Right lobe of liver (tissue), 6 donors: ENCODE measurements at regions of chr15 and their contacts with region 1.

Region 1: DNA sequence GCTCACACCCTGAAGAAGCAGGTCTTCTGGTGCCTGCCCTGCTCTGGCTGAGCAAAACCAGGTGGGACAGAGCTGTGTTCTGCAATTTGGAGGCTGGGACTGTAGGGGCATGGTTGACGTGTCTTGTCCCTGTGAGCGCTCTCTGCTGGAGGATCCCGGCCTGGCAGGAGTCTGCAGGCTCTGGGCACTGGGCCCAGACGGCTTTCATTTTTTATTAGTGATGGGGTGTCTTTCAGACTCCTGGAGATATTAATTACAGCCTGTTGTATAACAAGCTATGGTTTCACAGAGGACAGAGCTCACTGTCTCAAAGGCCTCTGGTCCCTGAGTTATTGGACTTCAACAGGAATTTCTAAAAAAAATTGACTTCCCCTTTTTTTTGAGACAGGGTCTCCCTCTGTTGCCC is 29.5 kb upstream of the ZNF710 start:
- DNase-seq: peak in 2 of 3 donors; percentile 61 to 65
- ATAC-seq: peak; percentile 78 to 90 (median 86)
- H3K4me3 ChIP-seq: no peak overlapping the region
- H3K27ac ChIP-seq: no peak overlapping the region
- H3K4me1 ChIP-seq: no peaks in the 10 kb centered on the region
- H3K27me3 ChIP-seq: no peaks in the 10 kb centered on the region
- CTCF ChIP-seq: peak; percentile 43 to 60 (median 52)
- POLR2A ChIP-seq: no peak

Region 2: DNA sequence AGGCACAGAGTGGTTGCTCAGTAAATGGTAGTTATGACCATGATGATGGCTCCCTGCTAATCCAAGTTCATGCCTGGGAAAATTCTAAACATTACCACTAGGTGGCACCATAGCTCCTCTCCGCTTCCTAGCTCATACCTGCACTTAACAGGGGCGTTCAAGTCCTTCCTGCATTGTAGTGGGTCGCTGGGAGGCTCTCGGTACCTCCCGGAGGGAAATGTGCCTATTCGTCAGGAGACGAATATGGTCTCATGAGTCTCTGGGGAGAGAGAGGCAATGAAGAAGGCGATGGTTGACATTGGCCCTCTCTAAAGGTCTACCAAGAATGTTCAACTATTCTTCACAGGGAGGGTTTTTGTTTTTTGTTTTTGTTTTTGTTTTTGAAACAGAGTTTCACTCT is 231.5 kb before region 1 on chr15:
- intact Hi-C with region 1: no loop called
- DNase-seq: peak in 1 of 3 donors; percentile 57
- ATAC-seq: peak; percentile 87 to 97 (median 94)
- H3K4me3 ChIP-seq: no peak overlapping the region
- H3K27ac ChIP-seq: no peak overlapping the region
- H3K4me1 ChIP-seq: no peaks in the 10 kb centered on the region
- H3K27me3 ChIP-seq: no peaks in the 10 kb centered on the region
- CTCF ChIP-seq: peak; percentile 90 to 95 (median 92)
- POLR2A ChIP-seq: no peak

Region 3: DNA sequence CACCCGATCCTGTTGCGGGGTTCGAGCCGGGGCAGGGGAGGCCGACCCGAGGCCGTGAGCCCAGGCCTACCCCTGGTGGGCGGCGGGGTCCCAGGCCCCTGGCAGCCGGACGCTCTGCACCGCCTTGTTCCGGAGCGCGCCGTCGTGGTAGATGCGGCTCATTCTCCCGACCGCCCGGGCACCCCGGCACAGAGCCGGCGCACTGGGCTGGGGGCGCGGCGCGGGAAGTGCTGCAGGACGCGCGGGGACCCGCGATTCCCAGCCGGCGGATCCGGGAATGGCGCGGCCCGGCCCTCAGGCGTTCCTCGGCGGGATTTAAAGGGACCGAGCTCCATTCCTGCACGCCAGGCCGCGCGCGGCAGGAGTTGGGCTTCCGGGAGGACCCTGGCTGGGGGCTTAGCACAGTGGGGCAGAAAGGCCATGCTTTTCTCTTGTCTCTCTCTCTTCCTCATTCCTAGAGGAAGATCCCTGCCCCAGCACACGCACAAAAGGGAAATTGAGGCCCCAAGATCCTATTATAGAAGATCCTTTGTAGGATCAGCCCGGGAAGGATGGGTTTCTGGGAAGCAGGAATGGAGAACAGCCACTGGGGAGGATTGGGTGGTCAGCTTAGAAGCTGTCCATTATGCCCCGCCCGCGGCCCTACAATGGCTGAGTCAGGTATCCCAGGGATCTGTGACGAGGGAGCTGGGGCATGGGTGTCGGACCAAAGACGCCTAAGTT is 58.8 kb before region 1 on chr15 and contains the start of gene ARPIN:
- intact Hi-C with region 1: loop called in 1 of 2 experiments (anchors 10 kb)
- DNase-seq: peak; percentile 60 to 72 (median 69)
- ATAC-seq: peak; percentile 71 to 86 (median 80)
- H3K4me3 ChIP-seq: peak within 1 kb of the TSS; percentile 78 to 87 (median 83)
- H3K27ac ChIP-seq: peak within 1 kb of the TSS; percentile 40 to 67 (median 50)
- H3K4me1 ChIP-seq: peaks cover 0 to 16% (median 4%) of the 10 kb centered on the region in 4 donors
- H3K27me3 ChIP-seq: no peaks in the 10 kb centered on the region
- CTCF ChIP-seq: no peak
- POLR2A ChIP-seq: peak; percentile 10
- total RNA-seq, gene ARPIN: 4.9 to 8.1 (median 6.9) TPM